Thyroid gland (tissue), 4 donors: ENCODE measurements at regions of chr12 and their contacts with region 1.

Region 1: GRCh38 chr12:108803428-108804105 is 53.8 kb downstream of the SSH1 start:
- DNase-seq: peak; percentile 72 to 77
- H3K4me3 ChIP-seq: no peak overlapping the region
- H3K27ac ChIP-seq: peak overlapping the region; percentile 51 to 72 (median 71)
- H3K4me1 ChIP-seq: peaks cover 0 to 13% of the 10 kb centered on the region in 2 donors
- H3K27me3 ChIP-seq: no peaks in the 10 kb centered on the region
- CTCF ChIP-seq: peak; percentile 87 to 95 (median 93)
- POLR2A ChIP-seq: no peak

Region 2: DNA sequence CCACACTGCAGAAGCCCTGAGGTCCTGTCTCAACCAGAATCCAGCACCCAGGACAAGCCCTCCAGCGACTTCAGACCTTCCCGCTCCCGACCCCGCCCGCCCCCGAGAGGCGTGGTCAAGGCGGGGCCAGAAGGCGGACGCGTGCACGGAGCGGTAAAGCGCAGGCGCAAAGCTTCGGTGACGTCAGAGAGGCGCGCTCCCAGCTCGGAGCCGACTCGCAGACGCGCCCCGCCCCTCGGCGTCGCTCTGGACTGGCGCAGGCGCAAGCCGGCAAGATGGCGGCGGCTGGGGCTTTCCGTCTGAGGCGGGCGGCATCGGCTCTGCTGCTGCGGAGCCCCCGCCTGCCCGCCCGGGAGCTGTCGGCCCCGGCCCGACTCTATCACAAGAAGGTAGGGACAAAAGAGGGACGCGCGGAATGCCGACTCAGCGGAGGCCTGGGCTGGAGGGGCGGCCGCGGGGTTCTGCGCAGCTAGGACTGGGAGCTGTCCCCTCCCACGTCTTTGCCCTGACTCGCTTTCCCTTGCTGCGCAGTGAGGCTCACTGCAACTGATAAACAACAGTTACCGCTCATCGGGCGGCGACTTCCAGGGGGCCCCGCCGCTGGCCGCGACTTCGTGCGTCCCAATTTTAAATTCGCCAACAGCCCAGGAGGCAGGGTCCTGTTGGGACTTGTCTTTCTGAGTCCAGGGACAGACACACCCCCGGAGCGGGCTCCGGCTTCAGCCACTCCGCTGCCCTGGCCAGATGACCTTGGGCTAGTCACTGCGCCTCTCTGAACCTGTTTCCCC is 241.0 kb before region 1 on chr12 and contains the start of gene ISCU:
- intact Hi-C with region 1: loop called (anchors 10 kb)
- DNase-seq: peak; percentile 94 to 98
- H3K4me3 ChIP-seq: peak within 1 kb of the TSS; percentile 76 to 93 (median 87)
- H3K27ac ChIP-seq: peak within 1 kb of the TSS; percentile 83 to 94 (median 91)
- H3K4me1 ChIP-seq: peaks cover 27 to 39% of the 10 kb centered on the region in 2 donors
- H3K27me3 ChIP-seq: no peaks in the 10 kb centered on the region
- CTCF ChIP-seq: peak in 1 of 6 experiments; percentile 11
- POLR2A ChIP-seq: peak; percentile 94 to 96
- total RNA-seq, gene ISCU: 229 to 512 (median 248) TPM

Region 3: GRCh38 chr12:108618079-108618952 is 185.3 kb before region 1 on chr12:
- intact Hi-C with region 1: loop called (anchors 5 kb)
- DNase-seq: peak; percentile 80 to 84
- H3K4me3 ChIP-seq: no peak overlapping the region
- H3K27ac ChIP-seq: peak overlapping the region; percentile 67 to 82 (median 74)
- H3K4me1 ChIP-seq: peaks cover 7 to 14% of the 10 kb centered on the region in 2 donors
- H3K27me3 ChIP-seq: no peaks in the 10 kb centered on the region
- CTCF ChIP-seq: peak; percentile 88 to 95 (median 92)
- POLR2A ChIP-seq: no peak

Region 4: DNA sequence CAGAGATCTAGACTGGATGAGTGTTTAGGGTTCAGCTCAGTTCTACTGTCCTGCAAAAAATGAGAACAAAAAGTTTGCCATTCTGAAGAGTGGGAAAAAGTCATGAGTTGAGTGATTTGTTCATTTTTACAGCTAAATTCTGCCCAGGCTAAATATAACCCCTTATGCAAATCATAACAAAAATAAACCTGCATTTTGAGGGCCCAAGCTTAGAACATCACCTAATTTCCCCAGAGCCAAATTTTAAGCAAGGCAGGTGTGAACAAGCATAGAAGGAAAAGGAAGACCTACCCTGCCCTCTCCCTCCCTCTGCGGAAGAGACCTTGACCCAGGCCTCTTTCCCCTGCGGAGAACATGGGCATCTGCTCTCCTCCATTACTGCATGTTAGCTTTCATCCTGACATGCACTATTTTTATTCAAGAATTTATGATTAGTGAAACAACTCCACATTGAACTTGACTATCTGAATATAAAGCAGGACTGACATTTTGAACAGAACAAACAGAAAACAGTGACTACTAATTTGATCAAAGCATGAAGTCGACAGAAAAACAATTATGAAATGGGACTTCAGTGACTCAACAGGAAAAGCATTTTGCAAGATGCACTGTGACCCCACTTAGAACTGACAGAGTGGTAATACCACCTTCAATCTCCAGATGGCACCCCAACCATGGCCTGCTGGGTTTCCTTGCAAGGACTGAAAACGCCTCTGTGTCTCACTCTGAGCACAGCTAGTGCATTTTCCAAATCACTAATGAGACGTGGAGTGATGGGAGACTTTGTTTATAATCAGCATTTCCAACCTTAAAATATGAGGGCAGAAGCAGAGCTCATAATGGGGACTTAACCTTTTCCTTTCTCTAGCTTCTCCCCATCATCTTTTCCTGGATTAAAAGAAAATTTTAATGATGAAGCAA is 139.0 kb before region 1 on chr12:
- intact Hi-C with region 1: loop called (anchors 2 kb)
- DNase-seq: peak; percentile 81 to 84
- H3K4me3 ChIP-seq: no peak overlapping the region
- H3K27ac ChIP-seq: peak overlapping the region; percentile 65 to 84 (median 80)
- H3K4me1 ChIP-seq: peaks cover 0 to 14% of the 10 kb centered on the region in 2 donors
- H3K27me3 ChIP-seq: no peaks in the 10 kb centered on the region
- CTCF ChIP-seq: peak; percentile 77 to 99 (median 94)
- POLR2A ChIP-seq: no peak

Region 5: GRCh38 chr12:108731105-108731865 is 72.3 kb before region 1 on chr12 and contains the start of gene CORO1C:
- intact Hi-C with region 1: loop called (anchors 5 kb)
- DNase-seq: peak; percentile 95 to 96
- H3K4me3 ChIP-seq: peak within 1 kb of the TSS; percentile 61 to 75 (median 67)
- H3K27ac ChIP-seq: peak within 1 kb of the TSS; percentile 86 to 93 (median 88)
- H3K4me1 ChIP-seq: peaks cover 0 to 5% of the 10 kb centered on the region in 2 donors
- H3K27me3 ChIP-seq: no peaks in the 10 kb centered on the region
- CTCF ChIP-seq: peak; percentile 41 to 86 (median 75)
- POLR2A ChIP-seq: peak; percentile 84 to 91
- total RNA-seq, gene CORO1C: 22.0 to 63.6 (median 30.1) TPM

Region 6: GRCh38 chr12:108846290-108846701 is 42.7 kb after region 1 on chr12:
- intact Hi-C with region 1: loop called (anchors 5 kb)
- DNase-seq: no peak
- H3K4me3 ChIP-seq: no peak overlapping the region
- H3K27ac ChIP-seq: peak overlapping the region in 1 of 3 donors; percentile 4
- H3K4me1 ChIP-seq: peaks cover 0 to 16% of the 10 kb centered on the region in 2 donors
- H3K27me3 ChIP-seq: no peaks in the 10 kb centered on the region
- CTCF ChIP-seq: no peak
- POLR2A ChIP-seq: no peak